ENCODE measurements at regions of chr16 and their contacts with region 1.

Region 1: GRCh38 chr16:48609652-48610029 is 339 bp downstream of the N4BP1 start:
- DNase-seq: no peak
- ATAC-seq: peak; percentile 39
- H3K4me3 ChIP-seq: peak overlapping the region; percentile 66
- H3K4me3 Mint-ChIP-seq: peak overlapping the region in 4 of 10 donors; percentile 24 to 95 (median 56)
- H3K27ac ChIP-seq: peak overlapping the region; percentile 94
- H3K27ac Mint-ChIP-seq: peak overlapping the region in 8 of 9 donors; percentile 88 to 99 (median 94)
- H3K4me1 ChIP-seq: peaks cover 63 to 76% of the 10 kb centered on the region in 2 donors
- H3K4me1 Mint-ChIP-seq: peaks cover 24 to 50% (median 43%) of the 10 kb centered on the region in 7 donors
- H3K27me3 ChIP-seq: no peaks in the 10 kb centered on the region
- H3K27me3 Mint-ChIP-seq: no peaks in the 10 kb centered on the region

Region 2: GRCh38 chr16:46822270-46822669 is 1787.4 kb before region 1 on chr16:
- CTCF ChIA-PET with region 1: no interaction called
- POLR2A ChIA-PET with region 1: no interaction called
- intact Hi-C with region 1: loop called in 1 of 2 experiments (anchors 10 kb)
- DNase-seq: no peak
- ATAC-seq: no peak
- H3K4me3 ChIP-seq: no peak overlapping the region
- H3K4me3 Mint-ChIP-seq: no peak overlapping the region
- H3K27ac ChIP-seq: no peak overlapping the region
- H3K27ac Mint-ChIP-seq: no peak overlapping the region
- H3K4me1 ChIP-seq: peaks cover 4% of the 10 kb centered on the region in 2 donors
- H3K4me1 Mint-ChIP-seq: peaks cover 9 to 41% (median 24%) of the 10 kb centered on the region in 7 donors
- H3K27me3 ChIP-seq: no peaks in the 10 kb centered on the region
- H3K27me3 Mint-ChIP-seq: no peaks in the 10 kb centered on the region

Region 3: DNA sequence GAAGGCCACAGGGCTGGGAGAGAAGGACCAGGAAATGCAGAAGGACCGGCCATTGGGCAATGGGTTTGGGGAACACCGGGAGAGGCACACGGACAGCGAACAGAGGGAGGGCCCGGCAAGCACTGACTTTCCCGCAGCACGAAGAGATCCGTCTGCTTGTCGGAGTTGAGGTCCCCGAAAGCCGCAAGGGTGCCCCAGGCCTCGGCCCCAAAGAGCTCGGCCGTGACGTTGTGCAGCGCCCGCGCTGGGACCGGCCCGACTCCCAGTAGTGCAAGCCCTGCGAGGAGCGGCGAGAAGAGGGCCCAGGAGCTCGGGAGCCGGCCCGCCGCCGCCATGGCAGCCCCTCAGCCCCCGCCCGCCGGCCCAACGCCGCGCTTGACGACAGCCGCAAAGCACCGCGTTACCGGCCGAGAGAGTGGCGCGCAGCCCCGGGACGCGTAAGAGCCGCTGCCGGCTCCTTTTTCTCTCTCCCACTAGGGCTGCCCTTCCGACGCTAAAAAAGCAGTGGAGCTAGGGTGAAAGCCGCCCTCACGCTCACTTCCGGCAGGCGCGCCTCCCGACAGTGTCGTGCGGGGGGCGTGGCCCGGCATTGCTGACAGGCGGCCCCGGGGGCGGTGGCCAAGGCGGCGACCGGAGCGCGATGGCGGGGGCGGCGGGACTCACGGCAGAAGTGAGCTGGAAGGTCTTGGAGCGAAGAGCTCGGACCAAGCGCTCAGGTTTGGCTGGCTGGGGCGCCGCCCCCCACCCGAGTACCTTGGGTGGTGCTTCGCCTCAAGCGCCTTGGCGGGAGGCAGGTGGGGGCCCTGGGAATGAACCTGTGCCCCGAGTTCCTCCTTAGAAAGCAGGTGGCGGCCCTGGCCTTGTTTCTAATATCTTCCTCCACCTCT is 1148.7 kb before region 1 on chr16 and contains the starts of genes ITFG1 and PHKB:
- CTCF ChIA-PET with region 1: no interaction called
- POLR2A ChIA-PET with region 1: no interaction called
- intact Hi-C with region 1: loop called (anchors 1 to 5 kb)
- DNase-seq: peak; percentile 94 to 98 (median 97)
- ATAC-seq: peak; percentile 97
- H3K4me3 ChIP-seq: peak within 1 kb of the TSS; percentile 94
- H3K4me3 Mint-ChIP-seq: peak within 1 kb of the TSS; percentile 91 to 100 (median 96)
- H3K27ac ChIP-seq: peak within 1 kb of the TSS; percentile 95
- H3K27ac Mint-ChIP-seq: peak within 1 kb of the TSS; percentile 91 to 99 (median 96)
- H3K4me1 ChIP-seq: peaks cover 10 to 21% of the 10 kb centered on the region in 2 donors
- H3K4me1 Mint-ChIP-seq: peaks cover 45 to 79% (median 73%) of the 10 kb centered on the region in 7 donors
- H3K27me3 ChIP-seq: no peaks in the 10 kb centered on the region
- H3K27me3 Mint-ChIP-seq: no peaks in the 10 kb centered on the region
- total RNA-seq, gene ITFG1: 21.7 to 34.3 (median 29.8) TPM
- total RNA-seq, gene PHKB: 48.5 to 82.9 (median 50.7) TPM

Region 4: GRCh38 chr16:48365581-48366164 is 244.0 kb before region 1 on chr16:
- CTCF ChIA-PET with region 1: interaction called, 3 read pairs
- POLR2A ChIA-PET with region 1: interaction called, 7 read pairs
- intact Hi-C with region 1: loop called (anchors 1 kb)
- DNase-seq: peak; percentile 66 to 86 (median 73)
- ATAC-seq: peak; percentile 95
- H3K4me3 ChIP-seq: peak overlapping the region; percentile 88
- H3K4me3 Mint-ChIP-seq: peak overlapping the region; percentile 83 to 100 (median 94)
- H3K27ac ChIP-seq: peak overlapping the region; percentile 77
- H3K27ac Mint-ChIP-seq: peak overlapping the region; percentile 89 to 100 (median 98)
- H3K4me1 ChIP-seq: peaks cover 14 to 15% of the 10 kb centered on the region in 2 donors
- H3K4me1 Mint-ChIP-seq: peaks cover 24 to 71% (median 54%) of the 10 kb centered on the region in 7 donors
- H3K27me3 ChIP-seq: no peaks in the 10 kb centered on the region
- H3K27me3 Mint-ChIP-seq: no peaks in the 10 kb centered on the region

Region 5: GRCh38 chr16:48596326-48596725 is 13.3 kb before region 1 on chr16:
- CTCF ChIA-PET with region 1: interaction called, 3 read pairs
- POLR2A ChIA-PET with region 1: interaction called, 10 read pairs
- intact Hi-C with region 1: loop called in 1 of 2 experiments (anchors 2 kb)
- DNase-seq: peak in 1 of 9 donors; percentile 61
- ATAC-seq: peak; percentile 56
- H3K4me3 ChIP-seq: no peak overlapping the region
- H3K4me3 Mint-ChIP-seq: peak overlapping the region in 5 of 10 donors; percentile 16 to 47 (median 40)
- H3K27ac ChIP-seq: no peak overlapping the region
- H3K27ac Mint-ChIP-seq: peak overlapping the region in 5 of 9 donors; percentile 7 to 80 (median 72)
- H3K4me1 ChIP-seq: peaks cover 22 to 35% of the 10 kb centered on the region in 2 donors
- H3K4me1 Mint-ChIP-seq: peaks cover 36 to 74% (median 59%) of the 10 kb centered on the region in 7 donors
- H3K27me3 ChIP-seq: no peaks in the 10 kb centered on the region
- H3K27me3 Mint-ChIP-seq: no peaks in the 10 kb centered on the region

Region 6: DNA sequence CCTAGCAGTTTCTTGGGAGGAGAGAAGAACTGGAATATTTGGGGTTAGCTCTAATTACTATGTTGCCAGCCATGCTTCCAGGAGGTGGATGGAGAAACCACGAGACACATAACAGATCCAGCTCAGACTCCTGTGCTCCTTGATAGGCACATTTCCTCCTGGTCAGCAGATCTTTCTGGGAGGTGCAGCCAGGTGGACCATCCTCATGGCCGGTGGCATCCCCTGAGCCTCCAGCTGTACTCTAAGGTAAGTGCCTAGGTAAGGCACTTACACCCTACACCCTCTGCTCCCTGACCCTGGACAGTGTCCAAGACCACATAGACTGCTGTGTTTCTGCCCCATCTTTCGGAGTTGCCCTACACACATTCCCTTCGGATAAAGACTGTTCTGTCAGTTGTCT is 27.4 kb after region 1 on chr16:
- CTCF ChIA-PET with region 1: no interaction called
- POLR2A ChIA-PET with region 1: no interaction called
- intact Hi-C with region 1: no loop called
- DNase-seq: no peak
- ATAC-seq: no peak
- H3K4me3 ChIP-seq: no peak overlapping the region
- H3K4me3 Mint-ChIP-seq: no peak overlapping the region
- H3K27ac ChIP-seq: no peak overlapping the region
- H3K27ac Mint-ChIP-seq: no peak overlapping the region
- H3K4me1 ChIP-seq: no peaks in the 10 kb centered on the region
- H3K4me1 Mint-ChIP-seq: no peaks in the 10 kb centered on the region
- H3K27me3 ChIP-seq: no peaks in the 10 kb centered on the region
- H3K27me3 Mint-ChIP-seq: peaks cover 0 to 7% (median 0%) of the 10 kb centered on the region in 5 donors

Region 7: GRCh38 chr16:48911700-48912099 is 302.1 kb after region 1 on chr16:
- CTCF ChIA-PET with region 1: no interaction called
- POLR2A ChIA-PET with region 1: no interaction called
- intact Hi-C with region 1: no loop called
- DNase-seq: no peak
- ATAC-seq: no peak
- H3K4me3 ChIP-seq: no peak overlapping the region
- H3K4me3 Mint-ChIP-seq: no peak overlapping the region
- H3K27ac ChIP-seq: no peak overlapping the region
- H3K27ac Mint-ChIP-seq: no peak overlapping the region
- H3K4me1 ChIP-seq: no peaks in the 10 kb centered on the region
- H3K4me1 Mint-ChIP-seq: no peaks in the 10 kb centered on the region
- H3K27me3 ChIP-seq: no peaks in the 10 kb centered on the region
- H3K27me3 Mint-ChIP-seq: peaks cover 0 to 18% (median 13%) of the 10 kb centered on the region in 5 donors

Region 8: DNA sequence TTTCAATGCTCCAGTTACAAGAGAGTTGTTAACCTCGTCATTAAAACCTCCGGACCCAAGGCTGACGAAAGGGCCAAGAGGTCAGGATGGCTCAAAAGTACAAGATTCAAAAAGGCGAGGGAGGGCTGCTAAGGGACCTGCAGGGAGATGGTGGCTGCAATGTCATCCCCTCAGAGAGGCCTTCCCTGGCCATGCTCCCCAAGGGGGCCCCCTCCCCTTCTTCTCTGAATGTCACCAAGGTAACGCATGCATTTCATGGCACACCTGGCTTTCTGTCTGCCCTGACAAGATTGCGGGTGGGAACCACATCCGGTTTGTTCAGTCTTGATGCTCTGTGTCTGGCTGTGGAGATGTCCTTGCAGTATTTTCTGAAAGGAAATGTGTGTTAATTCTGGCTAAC is 853.9 kb after region 1 on chr16:
- CTCF ChIA-PET with region 1: no interaction called
- POLR2A ChIA-PET with region 1: no interaction called
- intact Hi-C with region 1: loop called in 1 of 2 experiments (anchors 2 kb)
- DNase-seq: peak; percentile 18 to 94 (median 89)
- ATAC-seq: peak; percentile 86
- H3K4me3 ChIP-seq: peak overlapping the region; percentile 15
- H3K4me3 Mint-ChIP-seq: peak overlapping the region; percentile 64 to 90 (median 79)
- H3K27ac ChIP-seq: peak overlapping the region; percentile 70
- H3K27ac Mint-ChIP-seq: peak overlapping the region; percentile 77 to 99 (median 95)
- H3K4me1 ChIP-seq: peaks cover 27 to 49% of the 10 kb centered on the region in 2 donors
- H3K4me1 Mint-ChIP-seq: peaks cover 12 to 80% (median 67%) of the 10 kb centered on the region in 7 donors
- H3K27me3 ChIP-seq: no peaks in the 10 kb centered on the region
- H3K27me3 Mint-ChIP-seq: peaks cover 0 to 17% (median 0%) of the 10 kb centered on the region in 5 donors